ENCODE measurements at regions of chr18 and their contacts with region 1.

Region 1: GRCh38 chr18:21980744-21981143 is 188.6 kb upstream of the GATA6 start:
- DNase-seq: no peak
- ATAC-seq: no peak
- H3K4me3 Mint-ChIP-seq: no peak overlapping the region
- H3K27ac Mint-ChIP-seq: no peak overlapping the region
- H3K4me1 Mint-ChIP-seq: no peaks in the 10 kb centered on the region
- H3K27me3 Mint-ChIP-seq: peaks cover 7% of the 10 kb centered on the region

Region 2: GRCh38 chr18:21933931-21934765 is 46.6 kb before region 1 on chr18:
- CTCF ChIA-PET with region 1: no interaction called
- POLR2A ChIA-PET with region 1: no interaction called
- intact Hi-C with region 1: loop called in 1 of 2 experiments (anchors 5 kb)
- DNase-seq: no peak
- ATAC-seq: no peak
- H3K4me3 Mint-ChIP-seq: no peak overlapping the region
- H3K27ac Mint-ChIP-seq: no peak overlapping the region
- H3K4me1 Mint-ChIP-seq: no peaks in the 10 kb centered on the region
- H3K27me3 Mint-ChIP-seq: peaks cover 2% of the 10 kb centered on the region

Region 3: GRCh38 chr18:22399949-22400348 is 419.2 kb after region 1 on chr18:
- CTCF ChIA-PET with region 1: no interaction called
- POLR2A ChIA-PET with region 1: no interaction called
- intact Hi-C with region 1: loop called in 1 of 2 experiments (anchors 5 kb)
- DNase-seq: no peak
- ATAC-seq: no peak
- H3K4me3 Mint-ChIP-seq: no peak overlapping the region
- H3K27ac Mint-ChIP-seq: no peak overlapping the region
- H3K4me1 Mint-ChIP-seq: no peaks in the 10 kb centered on the region
- H3K27me3 Mint-ChIP-seq: no peaks in the 10 kb centered on the region

Measured in activated CD4-positive, alpha-beta T cell treated with anti-CD3 and anti-CD28 coated beads for 36 hours (primary cell).